ENCODE measurements at regions of chr5 and their contacts with region 1.

Region 1: DNA sequence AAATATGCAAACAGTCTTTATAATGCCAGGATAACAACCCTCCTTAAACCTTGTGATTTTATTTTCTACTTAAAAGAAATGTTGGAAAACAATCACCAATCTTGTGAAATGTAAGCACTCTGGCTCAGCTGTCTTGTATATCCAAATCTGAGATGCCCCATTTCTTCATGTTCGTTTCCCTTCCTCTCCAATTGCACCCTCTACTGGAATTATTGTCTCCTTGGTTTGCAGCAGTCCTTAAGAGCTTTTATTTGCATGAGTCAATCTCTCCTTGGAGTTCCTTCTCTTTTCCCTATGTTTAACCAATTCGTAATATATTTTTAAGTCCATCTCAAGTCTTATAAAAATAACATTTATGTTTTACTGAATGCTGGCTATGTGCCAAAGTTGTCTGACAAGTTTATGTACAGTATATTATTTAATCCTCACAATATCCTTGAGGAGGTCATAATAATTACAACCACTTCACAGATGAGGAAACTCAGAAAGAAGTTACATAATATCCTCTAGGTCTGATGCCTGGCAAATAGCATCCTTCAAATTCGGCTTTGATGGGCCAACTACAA is 362.0 kb upstream of the CDH10 start:
- DNase-seq: peak; percentile 69
- H3K4me3 ChIP-seq: no peak overlapping the region
- H3K27ac ChIP-seq: no peak overlapping the region
- H3K4me1 ChIP-seq: no peaks in the 10 kb centered on the region
- H3K27me3 ChIP-seq: no peaks in the 10 kb centered on the region
- CTCF ChIP-seq: peak; percentile 58

Region 2: DNA sequence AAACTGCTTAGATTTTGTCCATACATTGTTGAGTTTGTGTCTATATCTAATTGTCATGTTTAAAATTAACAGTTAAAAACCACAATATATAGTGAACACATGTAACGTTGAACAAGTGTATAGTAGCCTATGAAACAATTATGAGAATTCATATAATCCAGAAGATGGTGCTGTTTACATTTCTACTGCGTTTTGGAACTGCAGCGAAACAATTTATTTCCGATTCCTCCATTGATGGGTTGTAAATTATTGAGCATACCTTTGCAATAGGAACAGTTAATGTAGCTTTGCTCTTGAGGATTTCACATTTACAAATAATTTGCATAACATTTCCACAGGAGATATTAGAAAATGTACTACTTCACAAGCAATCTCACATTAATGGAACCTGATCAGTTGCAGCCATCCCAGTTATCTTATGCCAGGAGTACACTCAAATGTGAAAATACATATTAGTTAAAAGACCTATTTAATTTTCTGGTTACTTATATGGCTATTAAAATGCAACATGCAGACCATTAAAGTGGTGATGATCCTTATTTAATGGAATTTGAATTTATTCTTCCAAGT is 773.8 kb before region 1 on chr5:
- CTCF ChIA-PET with region 1: no interaction called
- POLR2A ChIA-PET with region 1: no interaction called
- intact Hi-C with region 1: loop called (anchors 5 kb)
- DNase-seq: peak; percentile 46
- H3K4me3 ChIP-seq: no peak overlapping the region
- H3K27ac ChIP-seq: no peak overlapping the region
- H3K4me1 ChIP-seq: peaks cover 6% of the 10 kb centered on the region
- H3K27me3 ChIP-seq: no peaks in the 10 kb centered on the region
- CTCF ChIP-seq: peak; percentile 67

Region 3: GRCh38 chr5:24444414-24444813 is 562.4 kb before region 1 on chr5:
- CTCF ChIA-PET with region 1: no interaction called
- POLR2A ChIA-PET with region 1: no interaction called
- intact Hi-C with region 1: loop called (anchors 2 kb)
- DNase-seq: no peak
- H3K4me3 ChIP-seq: no peak overlapping the region
- H3K27ac ChIP-seq: no peak overlapping the region
- H3K4me1 ChIP-seq: no peaks in the 10 kb centered on the region
- H3K27me3 ChIP-seq: no peaks in the 10 kb centered on the region
- CTCF ChIP-seq: no peak

Region 4: GRCh38 chr5:24539613-24540012 is 467.2 kb before region 1 on chr5:
- CTCF ChIA-PET with region 1: no interaction called
- POLR2A ChIA-PET with region 1: no interaction called
- intact Hi-C with region 1: loop called (anchors 5 kb)
- DNase-seq: peak; percentile 89
- H3K4me3 ChIP-seq: no peak overlapping the region
- H3K27ac ChIP-seq: peak overlapping the region; percentile 62
- H3K4me1 ChIP-seq: peaks cover 38% of the 10 kb centered on the region
- H3K27me3 ChIP-seq: no peaks in the 10 kb centered on the region
- CTCF ChIP-seq: no peak

Measured in A673 (cell line).